HEK293T (cell line): ENCODE measurements at regions of chr6 and their contacts with region 1.

Region 1: DNA sequence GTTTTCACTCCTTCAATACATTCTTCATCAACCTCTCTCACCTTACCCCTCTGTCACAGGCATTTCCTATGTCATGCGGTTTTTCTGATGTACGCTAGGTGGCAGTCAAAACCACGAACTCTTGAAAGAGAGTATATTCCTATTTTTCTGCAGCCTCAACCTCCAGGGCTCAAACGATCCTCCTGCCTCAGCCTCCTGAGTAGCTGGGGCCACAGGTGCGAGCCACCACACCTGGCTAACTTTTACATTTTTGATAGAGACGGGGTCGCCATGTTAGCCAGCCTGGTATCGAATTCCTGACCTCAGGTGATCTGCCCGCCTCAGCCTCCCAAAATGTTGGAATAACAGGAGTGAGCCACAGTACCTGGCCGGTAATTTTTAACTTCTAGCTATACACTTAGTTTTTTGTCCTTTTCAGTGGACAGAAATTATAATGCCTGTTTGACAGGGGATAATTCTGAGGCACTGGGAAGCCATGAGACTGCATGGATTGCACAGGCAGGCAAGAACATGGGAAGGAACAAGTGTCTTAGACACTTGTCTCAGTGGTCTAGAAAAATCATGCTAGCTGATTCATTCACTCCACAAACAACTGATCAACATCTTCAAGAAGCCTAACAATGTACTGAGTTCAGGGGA is 22.5 kb upstream of the HFE start:
- DNase-seq: peak; percentile 49

Region 2: GRCh38 chr6:26097268-26097875 is 32.6 kb after region 1 on chr6:
- CTCF ChIA-PET with region 1: interaction called, 17 read pairs
- POLR2A ChIA-PET with region 1: no interaction called
- DNase-seq: peak; percentile 49

Region 3: GRCh38 chr6:26103770-26104456 is 39.2 kb after region 1 on chr6:
- CTCF ChIA-PET with region 1: interaction called, 17 read pairs
- POLR2A ChIA-PET with region 1: interaction called, 11 read pairs
- DNase-seq: peak; percentile 70